ENCODE measurements at regions of chr1 and their contacts with region 1.

Region 1: DNA sequence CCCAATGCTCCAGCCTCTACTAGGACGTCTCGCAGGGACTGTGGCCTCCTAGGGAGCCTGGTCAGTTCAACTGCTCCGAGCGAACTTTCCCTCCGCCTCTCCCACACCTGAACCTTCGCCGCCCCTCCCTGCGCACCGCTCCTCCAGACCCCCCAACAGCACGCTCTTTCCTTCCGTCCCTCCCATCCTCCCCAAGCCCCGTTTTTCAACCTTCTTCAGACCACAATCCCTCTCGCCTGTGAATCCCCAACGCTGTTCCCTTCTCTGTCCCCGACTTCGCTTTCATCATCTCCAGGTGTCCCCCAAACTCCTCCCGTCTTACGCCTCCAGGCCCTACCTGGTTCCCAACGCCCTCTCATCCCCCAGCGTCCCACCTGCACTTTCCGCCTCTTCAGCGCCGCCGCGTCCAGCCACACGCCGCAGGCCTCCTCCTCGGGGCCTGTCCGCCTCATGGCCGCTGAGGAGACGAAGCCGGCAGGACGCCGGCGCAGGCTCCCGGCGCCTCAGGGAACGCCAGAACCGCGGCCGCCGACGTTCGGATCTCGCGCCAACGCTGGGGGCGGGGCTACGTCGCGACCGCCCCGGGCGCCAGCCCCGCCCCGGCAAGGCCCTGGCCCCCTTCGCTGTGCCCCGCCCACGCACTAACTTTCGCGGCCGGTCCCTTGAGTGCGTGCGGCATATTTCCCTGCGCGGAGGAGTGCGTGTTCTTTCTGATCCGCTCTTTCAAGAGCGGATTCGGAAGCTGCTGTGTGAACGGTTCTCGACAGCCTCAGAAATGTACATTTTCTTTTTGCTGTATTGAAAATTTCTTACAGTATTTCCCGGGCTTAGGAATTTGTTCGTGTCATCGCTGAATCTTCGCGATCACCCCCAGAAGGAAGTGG is at the start of gene AUNIP:
- DNase-seq: peak; percentile 97
- ATAC-seq: peak; percentile 95
- H3K4me3 Mint-ChIP-seq: peak within 1 kb of the TSS; percentile 94
- H3K27ac Mint-ChIP-seq: peak within 1 kb of the TSS; percentile 93
- H3K4me1 Mint-ChIP-seq: peaks cover 13% of the 10 kb centered on the region
- H3K27me3 Mint-ChIP-seq: no peaks in the 10 kb centered on the region
- total RNA-seq, gene AUNIP: 9.6 to 12.9 TPM

Region 2: DNA sequence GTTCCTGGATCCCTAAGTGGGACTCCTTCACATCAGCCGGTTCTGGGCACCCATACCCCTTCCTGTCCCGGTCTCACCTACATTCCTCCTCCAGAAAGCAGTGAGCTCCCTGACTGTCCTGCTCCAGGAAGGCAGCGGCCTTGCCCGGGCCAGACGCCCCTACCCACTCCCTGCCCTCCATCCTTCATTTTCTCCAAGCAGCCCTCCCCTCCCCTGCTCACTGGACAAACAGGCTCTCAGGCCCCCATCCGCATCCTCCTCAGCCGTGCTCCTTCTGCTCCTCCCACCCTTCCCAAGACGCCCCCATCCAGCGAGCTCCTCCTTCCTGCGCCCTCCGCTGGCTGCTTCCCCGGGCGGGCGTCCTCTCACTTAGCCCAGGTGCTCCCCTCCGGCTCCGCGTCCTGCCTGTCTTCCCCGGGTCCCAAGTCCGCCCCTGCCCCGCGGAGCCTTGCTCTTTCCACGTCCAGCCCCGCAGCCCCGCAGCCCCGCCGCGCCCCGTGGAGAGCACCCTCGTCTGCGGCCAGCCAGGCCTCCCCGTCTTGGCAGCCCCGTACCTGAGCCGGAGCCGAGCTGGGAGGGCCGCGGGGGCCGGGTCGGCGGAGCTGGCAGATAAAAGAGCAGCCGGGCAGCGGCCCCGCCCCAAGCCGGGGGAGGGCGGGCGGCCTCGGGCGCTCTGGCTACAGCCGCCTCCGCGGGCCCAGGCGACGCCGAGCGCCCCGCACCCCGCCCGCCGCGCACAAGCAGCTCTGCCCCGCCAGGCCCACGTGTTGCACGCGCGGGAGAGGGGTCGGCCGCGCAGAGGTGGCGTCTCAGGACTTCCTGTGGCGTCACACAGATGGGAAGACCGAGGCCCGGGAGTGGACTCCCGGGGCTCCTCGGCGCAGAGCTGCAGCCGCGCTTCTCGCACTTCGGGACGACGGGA is 16.0 kb after region 1 on chr1 and contains the start of gene PAQR7:
- CTCF ChIA-PET with region 1: no interaction called
- POLR2A ChIA-PET with region 1: interaction called, 5 read pairs
- intact Hi-C with region 1: loop called in 1 of 2 experiments (anchors 1 kb)
- DNase-seq: peak; percentile 78
- ATAC-seq: peak; percentile 86
- H3K4me3 Mint-ChIP-seq: peak within 1 kb of the TSS; percentile 82
- H3K27ac Mint-ChIP-seq: peak within 1 kb of the TSS; percentile 63
- H3K4me1 Mint-ChIP-seq: peaks cover 5% of the 10 kb centered on the region
- H3K27me3 Mint-ChIP-seq: peaks cover 2% of the 10 kb centered on the region
- total RNA-seq, gene PAQR7: 3.9 to 4.4 TPM

Measured in activated CD4-positive, alpha-beta T cell treated with anti-CD3 and anti-CD28 coated beads for 36 hours (primary cell).